ENCODE measurements at regions of chr18 and their contacts with region 1.

Region 1: DNA sequence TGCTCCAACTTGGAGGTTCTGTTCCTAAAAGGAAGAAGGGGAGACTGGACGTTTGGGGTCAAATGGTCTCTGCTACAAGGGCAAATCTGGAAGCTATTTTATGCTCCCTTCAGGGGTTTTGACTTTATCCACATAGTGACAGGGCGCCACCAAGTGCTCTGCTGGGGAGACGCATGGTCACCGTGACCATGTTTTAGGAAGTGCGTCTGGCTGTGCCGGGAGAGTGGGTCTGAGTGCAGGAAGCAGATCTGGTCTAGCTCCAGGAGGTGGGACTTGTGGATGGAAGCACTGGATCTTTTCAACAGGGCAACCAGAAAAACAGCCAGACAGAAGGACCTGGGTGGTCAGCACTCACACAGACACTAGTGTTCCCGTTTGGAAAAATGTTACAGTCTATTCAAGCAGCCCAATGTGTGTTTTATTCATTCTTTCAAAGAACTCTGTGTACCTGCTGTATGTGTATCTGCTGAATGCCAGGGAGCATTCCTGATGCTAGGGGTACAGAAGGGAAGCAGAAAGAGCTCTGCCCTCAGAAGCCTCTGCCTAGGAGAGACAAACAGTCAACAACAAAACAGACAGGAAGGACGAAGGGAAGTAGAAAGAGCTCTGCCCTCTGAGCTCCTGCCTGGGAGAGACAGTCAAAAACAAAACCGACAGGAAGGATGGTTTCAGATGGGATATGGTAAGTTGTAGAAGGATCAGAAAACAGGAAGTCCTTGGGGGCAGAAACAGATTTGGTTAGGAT is 14.3 kb downstream of the IMPA2 start:
- DNase-seq: peak; percentile 34 to 73 (median 58)
- ATAC-seq: peak; percentile 88
- H3K4me3 ChIP-seq: no peak overlapping the region
- H3K4me3 Mint-ChIP-seq: peak overlapping the region; percentile 24
- H3K27ac ChIP-seq: no peak overlapping the region
- H3K27ac Mint-ChIP-seq: no peak overlapping the region
- H3K4me1 ChIP-seq: peaks cover 9% of the 10 kb centered on the region
- H3K4me1 Mint-ChIP-seq: peaks cover 12% of the 10 kb centered on the region
- H3K27me3 ChIP-seq: no peaks in the 10 kb centered on the region
- H3K27me3 Mint-ChIP-seq: no peaks in the 10 kb centered on the region
- CTCF ChIP-seq: peak; percentile 69

Region 2: DNA sequence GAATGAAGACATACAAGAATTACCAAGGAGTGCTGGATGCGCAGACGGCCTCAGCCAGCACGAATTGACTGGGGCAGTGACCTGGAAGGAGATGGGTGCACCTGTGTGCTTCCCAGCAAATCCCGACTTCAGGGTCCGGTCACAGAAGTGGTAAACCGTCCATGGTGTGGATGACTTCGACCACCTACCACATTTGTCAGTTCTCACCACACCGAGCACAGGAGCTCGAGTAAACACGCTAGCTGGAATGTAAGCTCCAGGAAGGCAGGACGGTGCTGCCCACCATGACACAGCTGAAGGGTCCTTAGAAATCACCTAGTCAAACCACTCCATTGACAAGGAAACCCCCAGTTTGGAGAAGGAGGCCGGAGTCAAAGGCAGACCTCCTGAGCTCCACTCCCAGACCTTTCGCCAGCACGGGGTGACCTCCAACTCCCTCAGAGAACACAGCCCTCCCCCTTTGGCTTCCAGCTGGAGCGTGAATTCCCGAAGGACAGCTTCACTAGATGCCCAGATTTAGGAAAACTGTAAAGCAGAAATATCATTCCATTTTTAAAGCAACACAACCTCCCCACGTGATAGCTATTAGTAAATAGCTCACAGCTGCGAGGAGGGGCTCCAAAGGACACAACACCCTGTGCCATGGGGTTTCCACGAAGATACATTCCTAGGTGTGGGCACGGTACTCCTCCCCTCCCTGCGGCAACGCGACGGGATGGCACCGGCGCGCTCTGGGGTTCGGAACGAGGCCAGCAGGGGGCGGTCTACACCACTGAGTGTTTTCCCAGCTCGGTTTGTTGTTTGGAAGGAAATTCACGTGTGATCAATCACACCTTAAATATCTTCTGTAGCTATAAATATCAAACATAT is 340.6 kb before region 1 on chr18:
- CTCF ChIA-PET with region 1: no interaction called
- POLR2A ChIA-PET with region 1: no interaction called
- intact Hi-C with region 1: loop called in 1 of 2 experiments (anchors 2 kb)
- DNase-seq: peak in 5 of 9 experiments; percentile 3 to 42 (median 25)
- ATAC-seq: no peak
- H3K4me3 ChIP-seq: no peak overlapping the region
- H3K4me3 Mint-ChIP-seq: no peak overlapping the region
- H3K27ac ChIP-seq: no peak overlapping the region
- H3K27ac Mint-ChIP-seq: no peak overlapping the region
- H3K4me1 ChIP-seq: no peaks in the 10 kb centered on the region
- H3K4me1 Mint-ChIP-seq: peaks cover 2% of the 10 kb centered on the region
- H3K27me3 ChIP-seq: no peaks in the 10 kb centered on the region
- H3K27me3 Mint-ChIP-seq: peaks cover 47% of the 10 kb centered on the region
- CTCF ChIP-seq: peak; percentile 41

Region 3: GRCh38 chr18:11733031-11733430 is 262.6 kb before region 1 on chr18:
- CTCF ChIA-PET with region 1: interaction called, 10 read pairs
- POLR2A ChIA-PET with region 1: no interaction called
- intact Hi-C with region 1: loop called (anchors 1 to 2 kb)
- DNase-seq: peak; percentile 32 to 75 (median 64)
- ATAC-seq: peak; percentile 57
- H3K4me3 ChIP-seq: no peak overlapping the region
- H3K4me3 Mint-ChIP-seq: peak overlapping the region; percentile 29
- H3K27ac ChIP-seq: no peak overlapping the region
- H3K27ac Mint-ChIP-seq: no peak overlapping the region
- H3K4me1 ChIP-seq: no peaks in the 10 kb centered on the region
- H3K4me1 Mint-ChIP-seq: peaks cover 4% of the 10 kb centered on the region
- H3K27me3 ChIP-seq: peaks cover 0 to 3% of the 10 kb centered on the region in 2 experiments
- H3K27me3 Mint-ChIP-seq: peaks cover 34% of the 10 kb centered on the region
- CTCF ChIP-seq: peak; percentile 72

Region 4: DNA sequence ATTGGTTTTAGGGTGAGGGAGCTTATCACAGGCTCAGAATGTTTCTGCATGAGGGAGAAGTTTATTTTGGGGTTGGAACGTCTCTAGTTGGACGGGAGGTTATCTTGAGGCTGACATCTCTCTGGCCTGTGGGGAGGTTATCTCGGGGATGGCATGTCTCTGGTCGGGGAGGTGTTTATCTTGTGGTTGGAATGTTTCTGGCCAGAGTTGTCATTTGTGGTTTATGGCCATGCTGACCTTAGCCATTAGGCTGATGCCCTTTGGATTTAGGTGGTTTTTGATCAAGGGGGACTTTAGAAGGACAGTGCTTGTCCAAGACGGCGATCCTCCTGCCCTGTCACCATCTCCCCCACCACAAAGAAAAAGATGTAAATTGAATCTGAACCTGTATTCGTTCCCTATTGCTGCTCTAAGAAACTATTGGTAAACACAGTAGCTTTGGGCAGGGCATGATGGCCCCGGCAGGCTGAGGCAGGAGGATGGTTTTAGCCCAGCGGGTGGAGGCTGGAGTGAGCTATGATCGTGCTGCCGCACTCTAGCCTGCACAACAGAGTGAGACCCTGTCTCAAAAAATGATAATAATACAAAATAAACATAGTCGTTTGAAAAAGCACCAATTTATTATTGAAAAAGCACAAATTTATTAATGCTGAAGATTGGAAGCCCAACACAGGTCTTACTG is 69.7 kb before region 1 on chr18:
- CTCF ChIA-PET with region 1: interaction called, 448 read pairs
- POLR2A ChIA-PET with region 1: no interaction called
- intact Hi-C with region 1: no loop called
- DNase-seq: no peak
- ATAC-seq: no peak
- H3K4me3 ChIP-seq: no peak overlapping the region
- H3K4me3 Mint-ChIP-seq: no peak overlapping the region
- H3K27ac ChIP-seq: no peak overlapping the region
- H3K27ac Mint-ChIP-seq: no peak overlapping the region
- H3K4me1 ChIP-seq: no peaks in the 10 kb centered on the region
- H3K4me1 Mint-ChIP-seq: no peaks in the 10 kb centered on the region
- H3K27me3 ChIP-seq: no peaks in the 10 kb centered on the region
- H3K27me3 Mint-ChIP-seq: peaks cover 4% of the 10 kb centered on the region
- CTCF ChIP-seq: no peak

Region 5: DNA sequence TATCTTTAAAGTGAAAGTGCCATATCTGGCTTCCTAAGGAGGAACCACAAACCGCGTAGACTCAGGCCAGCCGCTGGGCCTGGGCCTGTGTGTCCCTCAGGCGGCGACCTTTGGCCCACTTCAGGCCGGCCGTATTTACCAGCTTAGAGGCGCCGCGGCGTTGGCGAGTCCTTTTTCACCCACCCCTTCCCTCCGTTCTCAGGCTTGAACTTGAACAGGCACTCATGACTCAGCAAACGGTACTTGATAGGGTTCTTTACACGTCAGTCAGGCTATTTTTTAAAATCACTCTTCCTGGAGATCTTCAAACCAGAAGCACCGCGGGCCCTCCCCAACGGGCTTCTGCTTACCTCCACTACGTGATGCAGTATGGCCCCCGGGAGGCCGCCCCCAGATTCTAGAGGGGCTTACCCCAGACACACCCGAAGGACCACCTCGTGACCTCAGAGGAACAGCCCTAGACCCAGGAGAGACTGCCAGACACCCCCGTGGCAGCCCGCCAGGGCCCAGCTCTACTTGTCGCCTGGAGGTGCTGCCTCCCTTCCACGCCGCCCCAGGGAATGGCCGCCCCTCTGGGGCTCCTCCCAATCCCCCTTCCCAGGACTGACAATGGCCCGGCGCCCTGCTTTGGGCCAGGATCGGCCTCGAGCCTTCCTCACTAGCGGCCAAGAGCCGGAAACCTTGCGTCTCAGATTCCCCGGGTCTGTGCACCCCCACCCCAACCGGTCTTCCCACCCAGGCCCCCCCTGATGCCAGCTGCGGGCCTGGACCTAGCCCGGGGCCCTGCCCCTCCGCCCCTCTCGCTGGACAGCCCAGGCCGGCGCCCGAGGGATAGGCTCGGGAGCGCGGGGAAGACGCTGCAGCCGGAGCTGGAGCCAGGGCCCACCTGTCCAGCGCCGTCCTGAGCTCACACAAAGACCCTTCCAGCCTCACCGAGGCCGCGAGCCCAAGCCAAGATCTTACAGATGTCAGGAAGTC is 48.1 kb before region 1 on chr18:
- CTCF ChIA-PET with region 1: interaction called, 448 read pairs
- POLR2A ChIA-PET with region 1: no interaction called
- intact Hi-C with region 1: no loop called
- DNase-seq: peak; percentile 9 to 84 (median 53)
- ATAC-seq: peak; percentile 86
- H3K4me3 ChIP-seq: peak overlapping the region; percentile 57 to 73
- H3K4me3 Mint-ChIP-seq: peak overlapping the region; percentile 86
- H3K27ac ChIP-seq: peak overlapping the region; percentile 36 to 63
- H3K27ac Mint-ChIP-seq: peak overlapping the region; percentile 72
- H3K4me1 ChIP-seq: peaks cover 4% of the 10 kb centered on the region
- H3K4me1 Mint-ChIP-seq: peaks cover 11% of the 10 kb centered on the region
- H3K27me3 ChIP-seq: no peaks in the 10 kb centered on the region
- H3K27me3 Mint-ChIP-seq: no peaks in the 10 kb centered on the region
- CTCF ChIP-seq: no peak

Region 6: GRCh38 chr18:12005538-12006487 is 10.2 kb after region 1 on chr18:
- CTCF ChIA-PET with region 1: interaction called, 17 read pairs
- POLR2A ChIA-PET with region 1: no interaction called
- intact Hi-C with region 1: no loop called
- DNase-seq: no peak
- ATAC-seq: no peak
- H3K4me3 ChIP-seq: no peak overlapping the region
- H3K4me3 Mint-ChIP-seq: no peak overlapping the region
- H3K27ac ChIP-seq: no peak overlapping the region
- H3K27ac Mint-ChIP-seq: no peak overlapping the region
- H3K4me1 ChIP-seq: no peaks in the 10 kb centered on the region
- H3K4me1 Mint-ChIP-seq: no peaks in the 10 kb centered on the region
- H3K27me3 ChIP-seq: no peaks in the 10 kb centered on the region
- H3K27me3 Mint-ChIP-seq: no peaks in the 10 kb centered on the region
- CTCF ChIP-seq: no peak

Region 7: GRCh38 chr18:12038639-12039417 is 43.2 kb after region 1 on chr18:
- CTCF ChIA-PET with region 1: interaction called, 8 read pairs
- POLR2A ChIA-PET with region 1: no interaction called
- intact Hi-C with region 1: loop called in 1 of 2 experiments (anchors 2 kb)
- DNase-seq: peak; percentile 41 to 87 (median 72)
- ATAC-seq: peak; percentile 92
- H3K4me3 ChIP-seq: peak overlapping the region; percentile 48 to 50
- H3K4me3 Mint-ChIP-seq: peak overlapping the region; percentile 74
- H3K27ac ChIP-seq: no peak overlapping the region
- H3K27ac Mint-ChIP-seq: no peak overlapping the region
- H3K4me1 ChIP-seq: no peaks in the 10 kb centered on the region
- H3K4me1 Mint-ChIP-seq: peaks cover 4% of the 10 kb centered on the region
- H3K27me3 ChIP-seq: peaks cover 2 to 3% of the 10 kb centered on the region in 2 experiments
- H3K27me3 Mint-ChIP-seq: peaks cover 16% of the 10 kb centered on the region
- CTCF ChIP-seq: peak; percentile 97

Region 8: GRCh38 chr18:12287684-12288402 is 292.2 kb after region 1 on chr18:
- CTCF ChIA-PET with region 1: no interaction called
- POLR2A ChIA-PET with region 1: no interaction called
- intact Hi-C with region 1: no loop called
- DNase-seq: no peak
- ATAC-seq: no peak
- H3K4me3 ChIP-seq: no peak overlapping the region
- H3K4me3 Mint-ChIP-seq: no peak overlapping the region
- H3K27ac ChIP-seq: no peak overlapping the region
- H3K27ac Mint-ChIP-seq: no peak overlapping the region
- H3K4me1 ChIP-seq: no peaks in the 10 kb centered on the region
- H3K4me1 Mint-ChIP-seq: peaks cover 2% of the 10 kb centered on the region
- H3K27me3 ChIP-seq: peaks cover 0 to 3% of the 10 kb centered on the region in 2 experiments
- H3K27me3 Mint-ChIP-seq: peaks cover 30% of the 10 kb centered on the region
- CTCF ChIP-seq: no peak

Region 9: DNA sequence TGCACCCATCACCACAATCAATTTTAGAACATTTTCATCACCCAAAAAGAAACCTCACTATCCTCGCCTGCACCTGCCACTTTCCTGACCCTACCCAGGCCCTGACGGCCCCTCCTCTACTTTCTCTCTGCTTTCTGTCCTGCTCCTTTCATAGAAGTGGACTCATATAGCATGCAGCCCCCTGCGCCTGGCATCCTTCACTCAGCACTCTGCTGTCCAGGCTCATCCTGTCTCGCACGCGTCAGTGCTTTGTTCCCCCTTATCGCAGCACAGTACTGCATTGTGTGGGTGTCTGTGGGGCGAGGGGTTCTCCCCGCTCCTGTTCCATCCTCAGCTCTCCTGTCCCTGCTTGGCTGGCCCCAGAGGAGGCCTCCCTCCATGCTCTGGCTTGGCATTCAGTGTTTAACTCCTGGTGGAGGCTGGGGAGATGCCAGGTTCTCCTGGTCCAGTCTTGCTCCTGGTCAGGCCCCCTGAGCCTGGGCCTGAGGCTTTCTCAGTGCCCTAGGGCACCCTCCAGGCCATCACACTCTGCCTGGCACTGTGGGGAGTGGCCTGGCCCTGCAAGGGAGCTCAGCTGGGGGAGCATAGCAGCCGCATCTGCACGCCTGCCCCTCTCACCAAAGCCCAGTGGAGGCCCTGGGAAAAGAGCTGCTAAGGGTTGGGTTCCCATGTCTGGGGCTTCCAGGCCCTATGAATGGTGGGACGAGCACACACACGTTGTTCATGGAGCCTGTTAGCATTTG is 305.8 kb after region 1 on chr18:
- CTCF ChIA-PET with region 1: no interaction called
- POLR2A ChIA-PET with region 1: no interaction called
- intact Hi-C with region 1: no loop called
- DNase-seq: no peak
- ATAC-seq: no peak
- H3K4me3 ChIP-seq: no peak overlapping the region
- H3K4me3 Mint-ChIP-seq: no peak overlapping the region
- H3K27ac ChIP-seq: no peak overlapping the region
- H3K27ac Mint-ChIP-seq: no peak overlapping the region
- H3K4me1 ChIP-seq: no peaks in the 10 kb centered on the region
- H3K4me1 Mint-ChIP-seq: no peaks in the 10 kb centered on the region
- H3K27me3 ChIP-seq: no peaks in the 10 kb centered on the region
- H3K27me3 Mint-ChIP-seq: peaks cover 20% of the 10 kb centered on the region
- CTCF ChIP-seq: no peak

Measured in CD8-positive, alpha-beta T cell (primary cell).